H1 (cell line): ENCODE measurements at regions of chr6 and their contacts with region 1.

Region 1: GRCh38 chr6:90274451-90275030 is 22.1 kb downstream of the BACH2 start:
- DNase-seq: no peak
- H3K4me3 ChIP-seq: no peak overlapping the region
- H3K27ac ChIP-seq: no peak overlapping the region
- H3K4me1 ChIP-seq: peaks cover 0 to 3% (median 1%) of the 10 kb centered on the region in 4 experiments; a peak in 2 of 7 replicates
- H3K27me3 ChIP-seq: no peaks in the 10 kb centered on the region
- CTCF ChIP-seq: peak in 2 of 3 experiments; percentile 22 to 50; a peak in 3 of 4 replicates
- EP300 ChIP-seq: no peak
- POLR2A ChIP-seq: no peak
- RAD21 ChIP-seq: peak; percentile 39 to 50

Region 2: GRCh38 chr6:90263633-90264032 is 10.9 kb before region 1 on chr6:
- CTCF ChIA-PET with region 1: interaction called, 10 read pairs
- POLR2A ChIA-PET with region 1: no interaction called
- DNase-seq: no peak
- H3K4me3 ChIP-seq: no peak overlapping the region
- H3K27ac ChIP-seq: no peak overlapping the region
- H3K4me1 ChIP-seq: no peaks in the 10 kb centered on the region
- H3K27me3 ChIP-seq: no peaks in the 10 kb centered on the region
- CTCF ChIP-seq: no peak
- EP300 ChIP-seq: no peak
- POLR2A ChIP-seq: no peak
- RAD21 ChIP-seq: no peak

Region 3: GRCh38 chr6:90285611-90286381 is 11.3 kb after region 1 on chr6:
- CTCF ChIA-PET with region 1: interaction called, 26 read pairs
- POLR2A ChIA-PET with region 1: interaction called, 3 read pairs
- DNase-seq: no peak
- H3K4me3 ChIP-seq: no peak overlapping the region
- H3K27ac ChIP-seq: no peak overlapping the region
- H3K4me1 ChIP-seq: peaks cover 7 to 19% (median 12%) of the 10 kb centered on the region in 4 experiments; a peak in 6 of 7 replicates
- H3K27me3 ChIP-seq: no peaks in the 10 kb centered on the region
- CTCF ChIP-seq: no peak
- EP300 ChIP-seq: peak in 1 of 2 experiments; percentile 40; a peak in 1 of 3 replicates
- POLR2A ChIP-seq: no peak
- RAD21 ChIP-seq: 0 out of 4 replicates have a peak, but pooled peaks of 1 of the 2 experiments have one; percentile 20